Posterior vena cava (tissue), 2 donors: ENCODE measurements at regions of chr9 and their contacts with region 1.

Region 1: GRCh38 chr9:133436681-133437080 is 14.5 kb downstream of the ADAMTS13 start:
- DNase-seq: no peak

Region 2: DNA sequence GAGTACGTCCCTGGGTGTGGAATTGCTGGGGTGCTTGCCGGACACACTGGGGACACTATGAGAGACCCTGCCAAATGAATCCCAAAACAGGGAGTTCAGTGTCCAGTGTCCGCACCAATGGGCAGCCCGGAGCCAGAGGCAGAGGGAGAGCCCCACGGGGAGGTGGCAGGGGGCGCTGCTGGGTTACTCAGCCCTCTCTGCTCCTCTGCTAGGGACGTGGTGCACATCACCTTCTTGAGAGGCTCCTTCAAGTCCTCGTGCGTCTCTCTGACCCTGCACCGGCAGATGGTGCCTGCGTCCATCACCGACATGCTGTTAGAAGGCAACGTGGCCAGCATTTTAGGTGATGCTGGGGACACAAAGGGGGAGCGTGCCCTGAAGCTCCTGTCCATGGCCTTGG is 39.7 kb before region 1 on chr9:
- intact Hi-C with region 1: loop called in 1 of 2 experiments (anchors 1 kb)
- DNase-seq: no peak